Head of caudate nucleus (tissue), 42 donors: ENCODE measurements at regions of chr15 and their contacts with region 1.

Region 1: DNA sequence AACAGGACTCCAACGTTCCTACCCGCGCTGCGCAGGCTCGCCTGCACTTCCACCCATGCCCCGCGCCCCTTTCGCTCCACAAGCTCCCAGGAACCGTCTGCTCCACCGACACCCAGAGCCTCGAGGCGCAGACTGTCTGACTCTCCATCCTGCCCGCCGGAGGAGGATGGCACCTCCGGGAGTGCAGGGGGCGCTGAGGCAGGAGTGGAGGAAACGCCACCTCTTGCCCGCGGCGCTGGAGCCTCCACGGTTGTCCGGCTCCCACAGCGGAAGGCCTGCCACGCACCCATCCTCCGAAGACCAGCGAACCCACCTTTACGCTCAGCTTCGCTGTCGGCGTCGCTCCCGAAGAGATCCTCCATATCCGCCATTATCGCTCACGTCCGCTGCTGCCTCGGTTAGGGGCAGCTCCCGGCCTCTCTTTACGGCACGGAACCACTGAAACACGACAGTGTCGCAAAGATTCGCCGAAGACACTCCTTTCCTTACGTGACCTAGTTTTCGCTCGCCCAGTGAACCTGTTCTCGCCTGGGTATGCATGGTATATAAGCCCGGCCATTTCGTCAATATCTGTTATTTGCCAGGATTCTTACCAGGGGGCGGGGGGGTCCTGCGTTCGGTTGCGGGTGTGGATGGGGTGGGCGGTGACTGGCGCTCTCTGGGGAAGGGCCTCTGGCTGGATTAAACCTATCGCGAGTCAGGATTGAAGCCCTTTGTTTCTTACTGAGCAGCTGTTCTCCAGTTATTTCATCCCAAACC is at the start of gene LEO1:
- DNase-seq: peak; percentile 88 to 98 (median 94)

Region 2: GRCh38 chr15:52018693-52019387 is 47.3 kb after region 1 on chr15 and contains the start of gene MAPK6:
- intact Hi-C with region 1: loop called (anchors 5 kb)
- DNase-seq: peak; percentile 77 to 96 (median 92)

Region 3: DNA sequence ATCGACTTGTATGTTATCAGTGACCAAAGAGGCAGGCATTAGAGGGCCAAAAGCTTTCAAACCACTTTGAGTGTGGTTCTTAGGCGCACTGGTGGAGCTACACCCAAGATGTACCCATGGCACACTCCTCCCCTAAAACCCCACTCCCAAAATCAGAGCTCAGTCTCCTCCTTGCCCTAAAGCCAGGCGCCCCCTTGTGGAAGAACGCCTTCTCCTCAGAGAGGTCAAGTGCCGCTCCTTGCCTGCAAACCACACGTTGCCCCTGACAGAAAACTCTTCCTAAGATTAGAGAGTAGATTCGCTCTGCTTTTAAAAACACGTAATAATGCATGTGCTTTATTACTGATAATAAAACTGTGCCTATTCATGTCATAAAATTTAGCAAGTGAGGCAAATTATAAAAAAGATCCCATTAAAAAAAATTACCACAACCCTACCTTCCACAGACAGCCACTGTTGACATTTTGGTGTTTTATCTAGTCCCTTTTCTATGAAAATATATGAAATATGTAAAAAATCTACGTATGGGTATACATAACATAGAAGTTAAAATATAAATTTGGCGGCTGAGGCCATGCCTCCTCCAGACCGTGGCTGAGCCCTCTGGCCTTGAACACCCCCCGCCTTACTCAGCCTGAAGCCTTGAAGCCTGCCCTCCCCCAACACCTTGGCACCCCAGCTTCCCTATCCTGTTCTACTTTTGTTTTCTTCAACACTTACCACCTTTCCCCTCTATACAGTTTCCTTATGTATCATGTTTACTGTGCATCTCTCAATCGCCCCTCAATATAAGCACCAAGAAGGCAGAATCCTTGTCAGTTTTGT is 107.5 kb after region 1 on chr15:
- intact Hi-C with region 1: loop called (anchors 5 kb)
- DNase-seq: peak; percentile 64 to 95 (median 84)

Region 4: GRCh38 chr15:52124270-52124880 is 152.8 kb after region 1 on chr15:
- intact Hi-C with region 1: no loop called
- DNase-seq: peak in 1 of 42 donors; percentile 3